ENCODE measurements at regions of chr3 and their contacts with region 1.

Region 1: GRCh38 chr3:115692887-115693524 is 69.7 kb downstream of the GAP43 start:
- DNase-seq: peak; percentile 53 to 70
- ATAC-seq: peak; percentile 100

Region 2: DNA sequence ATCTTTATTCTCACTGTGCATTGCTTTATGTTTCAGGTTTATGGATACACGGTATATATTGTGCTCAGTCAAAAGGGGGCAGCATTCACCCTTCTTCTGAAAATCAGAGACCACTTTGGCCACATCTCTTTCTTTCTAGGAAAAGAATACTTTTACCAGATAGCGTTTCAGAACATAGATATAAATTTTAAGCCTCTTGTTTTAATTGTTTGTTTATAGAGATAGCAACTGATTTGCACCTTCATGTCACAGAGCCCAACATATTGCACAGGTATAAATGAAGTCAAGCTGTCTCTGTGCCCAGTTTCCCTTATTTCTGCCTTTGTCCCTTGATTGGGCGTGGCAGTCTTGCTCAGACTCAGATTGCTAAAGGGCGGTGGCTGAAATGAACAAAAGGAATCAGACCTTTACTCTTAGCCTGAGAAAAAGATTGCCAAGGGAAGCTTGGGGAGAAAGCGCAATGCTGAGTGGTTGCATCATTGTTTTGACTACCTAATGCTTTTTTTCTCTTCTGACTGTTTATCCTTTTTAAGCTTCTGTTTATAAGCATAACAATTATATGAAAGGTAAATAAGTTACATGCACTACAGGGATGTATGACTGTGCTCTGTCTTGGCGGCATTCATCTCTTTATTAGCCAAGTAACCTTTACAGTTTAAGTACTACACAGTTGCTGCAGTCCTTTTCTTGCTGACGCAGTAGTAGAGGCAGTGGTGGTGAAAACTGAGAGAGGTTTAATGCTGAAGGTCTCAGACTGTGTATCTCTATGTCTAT is 475.1 kb before region 1 on chr3:
- intact Hi-C with region 1: loop called (anchors 5 kb)
- DNase-seq: peak; percentile 33 to 40
- ATAC-seq: peak; percentile 98